Activated naive CD4-positive, alpha-beta T cell treated with anti-CD3 and anti-CD28 coated beads for 36 hours (primary cell): ENCODE measurements at regions of chr12 and their contacts with region 1.

Region 1: DNA sequence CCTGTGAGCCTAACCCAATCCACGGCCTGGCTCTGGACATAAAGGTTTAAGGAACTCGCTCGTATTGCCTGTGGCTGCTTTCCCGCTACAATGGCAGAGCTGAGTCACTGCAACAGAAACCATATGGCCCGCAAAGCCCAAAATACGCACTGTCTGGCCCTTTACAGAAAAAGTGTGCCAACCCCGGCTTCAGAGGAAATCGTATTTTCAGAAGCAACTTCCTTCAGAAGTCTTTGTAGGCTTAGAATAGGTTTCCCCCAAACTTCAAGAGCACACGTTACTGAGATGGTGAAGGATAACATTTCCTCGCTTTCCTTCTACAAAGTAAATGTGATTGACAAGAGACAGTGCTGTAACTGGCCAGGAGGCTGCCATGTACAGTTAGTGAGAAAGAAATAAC is 34.8 kb upstream of the TESC start:
- DNase-seq: peak; percentile 81
- H3K4me3 Mint-ChIP-seq: peak overlapping the region; percentile 13
- H3K27ac Mint-ChIP-seq: peak overlapping the region; percentile 80
- H3K4me1 Mint-ChIP-seq: peaks cover 16% of the 10 kb centered on the region
- H3K27me3 Mint-ChIP-seq: no peaks in the 10 kb centered on the region

Region 2: DNA sequence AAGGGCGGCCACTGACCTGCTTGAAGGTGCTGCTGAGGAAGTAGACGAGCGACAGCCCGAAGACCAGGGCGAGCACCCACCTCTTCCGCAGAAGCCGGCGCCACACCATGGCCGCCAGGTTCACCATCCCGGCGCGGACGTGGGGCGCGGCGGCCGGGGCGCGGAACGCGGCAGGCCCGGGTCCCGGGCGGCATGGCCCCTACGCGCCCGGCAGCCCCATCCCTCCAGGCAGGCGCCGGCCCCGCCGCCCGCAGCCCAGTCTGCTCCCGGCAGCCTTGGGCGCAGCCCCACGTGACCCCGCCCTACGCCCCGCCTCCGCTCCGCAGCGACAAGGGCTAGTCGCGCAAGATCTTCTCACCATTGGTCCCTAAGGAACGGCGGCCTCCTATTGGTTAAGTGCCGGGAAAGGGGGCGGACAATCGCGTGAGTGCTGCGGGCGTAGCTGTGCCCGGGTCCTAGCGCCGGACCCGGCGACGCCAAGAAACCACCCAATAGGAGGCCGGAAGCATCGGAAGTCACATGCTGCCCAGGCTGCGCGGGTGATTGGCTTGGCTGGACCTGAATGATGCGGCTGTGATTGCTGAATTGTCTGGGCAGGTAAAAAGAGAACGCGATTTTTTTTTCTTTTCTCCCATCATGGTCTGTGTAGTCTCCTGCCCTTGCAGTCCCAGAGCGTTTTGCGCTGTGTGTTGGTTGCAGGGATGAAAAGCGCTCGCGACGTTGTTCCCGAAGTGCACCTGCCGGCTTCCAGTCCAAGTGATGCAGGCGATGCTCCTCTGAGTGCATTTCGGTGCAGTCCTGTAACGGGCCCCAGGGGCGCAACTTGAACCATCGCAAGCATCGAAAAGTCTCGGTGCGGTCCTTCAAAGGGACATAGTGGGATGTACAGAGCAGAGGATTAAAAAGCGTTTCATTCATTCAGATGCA is 396.0 kb before region 1 on chr12 and contains the starts of genes RNFT2 and SPRING1:
- CTCF ChIA-PET with region 1: no interaction called
- intact Hi-C with region 1: loop called (anchors 10 kb)
- DNase-seq: peak; percentile 99
- H3K4me3 Mint-ChIP-seq: peak within 1 kb of the TSS; percentile 96
- H3K27ac Mint-ChIP-seq: peak within 1 kb of the TSS; percentile 79
- H3K4me1 Mint-ChIP-seq: peaks cover 22% of the 10 kb centered on the region
- H3K27me3 Mint-ChIP-seq: no peaks in the 10 kb centered on the region
- total RNA-seq, gene RNFT2: 13.0 to 15.8 TPM
- total RNA-seq, gene SPRING1: 14.8 to 16.9 TPM

Region 3: GRCh38 chr12:117011988-117012805 is 121.9 kb before region 1 on chr12:
- CTCF ChIA-PET with region 1: no interaction called
- intact Hi-C with region 1: no loop called
- DNase-seq: no peak
- H3K4me3 Mint-ChIP-seq: no peak overlapping the region
- H3K27ac Mint-ChIP-seq: no peak overlapping the region
- H3K4me1 Mint-ChIP-seq: no peaks in the 10 kb centered on the region
- H3K27me3 Mint-ChIP-seq: no peaks in the 10 kb centered on the region

Region 4: DNA sequence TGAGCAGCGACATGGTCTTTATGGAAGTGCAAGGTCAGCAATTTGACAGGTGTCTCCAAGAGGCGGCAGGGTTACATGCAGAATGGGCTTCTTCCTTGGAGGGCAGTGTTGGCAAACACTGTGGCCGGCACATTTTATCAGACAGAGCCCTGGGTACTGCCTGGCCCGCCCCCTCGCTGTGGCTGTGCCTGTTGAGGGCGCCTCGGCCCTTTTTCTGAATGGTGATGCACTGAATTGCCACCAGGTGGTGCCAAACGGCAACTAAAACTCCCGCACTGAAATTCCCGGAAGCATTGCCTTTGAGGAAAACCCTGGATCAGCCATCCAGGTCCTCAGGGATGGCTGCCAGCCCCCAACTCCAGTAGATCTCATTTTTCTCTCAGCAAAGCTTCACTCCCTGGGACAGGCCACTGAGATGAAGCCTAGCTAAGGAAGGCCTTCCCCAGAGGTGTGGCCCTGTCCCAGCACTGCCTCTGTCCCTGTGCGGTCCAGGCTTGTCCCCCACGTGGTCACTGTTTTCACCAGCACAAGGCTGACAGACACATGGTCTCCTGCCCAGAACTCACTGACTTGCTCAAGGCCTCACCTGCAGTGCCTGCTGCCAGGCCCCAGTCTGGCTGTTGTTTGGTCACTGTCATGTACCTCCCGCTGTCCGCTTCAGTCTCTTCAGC is 108.4 kb before region 1 on chr12:
- CTCF ChIA-PET with region 1: interaction called, 6 read pairs
- intact Hi-C with region 1: loop called (anchors 1 kb)
- DNase-seq: peak; percentile 54
- H3K4me3 Mint-ChIP-seq: no peak overlapping the region
- H3K27ac Mint-ChIP-seq: no peak overlapping the region
- H3K4me1 Mint-ChIP-seq: no peaks in the 10 kb centered on the region
- H3K27me3 Mint-ChIP-seq: no peaks in the 10 kb centered on the region

Region 5: DNA sequence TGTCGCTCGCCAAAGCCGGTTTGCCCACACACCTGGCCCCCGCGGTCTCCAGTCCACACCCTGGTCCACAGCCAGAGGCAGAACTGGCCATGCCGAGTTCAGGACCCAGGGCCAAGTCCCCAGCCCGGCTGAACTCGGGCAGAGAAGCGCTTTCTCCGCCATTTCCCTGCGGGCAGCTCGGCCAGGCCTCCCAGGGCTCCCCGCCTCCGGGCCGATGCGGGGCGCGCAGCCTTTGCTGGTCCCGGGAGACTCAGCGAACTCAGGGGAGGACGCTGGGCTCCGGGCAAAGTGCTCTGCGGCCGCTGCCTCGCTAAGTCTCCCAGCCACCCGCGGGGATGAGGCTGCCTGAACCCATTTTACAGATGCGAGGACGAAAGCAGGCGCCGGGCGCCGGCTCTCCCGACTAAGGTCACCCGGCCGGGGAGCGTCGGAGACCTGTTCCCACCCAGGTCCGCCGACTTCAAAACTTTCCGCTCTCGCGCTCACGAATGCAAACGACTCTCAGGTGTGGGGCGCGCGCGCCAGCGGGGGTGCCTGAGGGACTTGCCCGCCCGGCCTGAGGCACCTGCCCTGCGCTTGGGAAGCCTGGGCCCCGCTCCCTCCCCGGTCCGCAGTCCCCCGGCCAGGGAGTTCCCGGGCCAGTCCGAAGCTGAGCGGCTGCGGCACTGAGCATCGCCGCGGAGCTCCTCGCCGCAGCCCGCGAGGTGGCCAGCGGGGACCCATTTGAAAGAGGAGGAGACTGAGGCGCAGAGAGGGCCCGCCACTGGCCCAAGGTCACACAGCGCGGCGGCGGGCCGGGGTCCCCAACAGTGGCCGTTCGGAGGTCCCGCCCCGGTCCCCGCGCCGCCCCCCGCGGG is 35.5 kb before region 1 on chr12:
- CTCF ChIA-PET with region 1: no interaction called
- intact Hi-C with region 1: loop called (anchors 1 kb)
- DNase-seq: peak; percentile 53
- H3K4me3 Mint-ChIP-seq: peak overlapping the region; percentile 67
- H3K27ac Mint-ChIP-seq: no peak overlapping the region
- H3K4me1 Mint-ChIP-seq: peaks cover 10% of the 10 kb centered on the region
- H3K27me3 Mint-ChIP-seq: peaks cover 31% of the 10 kb centered on the region

Region 6: GRCh38 chr12:117155278-117156060 is 21.4 kb after region 1 on chr12:
- CTCF ChIA-PET with region 1: no interaction called
- intact Hi-C with region 1: loop called (anchors 1 kb)
- DNase-seq: peak; percentile 81
- H3K4me3 Mint-ChIP-seq: no peak overlapping the region
- H3K27ac Mint-ChIP-seq: no peak overlapping the region
- H3K4me1 Mint-ChIP-seq: peaks cover 17% of the 10 kb centered on the region
- H3K27me3 Mint-ChIP-seq: no peaks in the 10 kb centered on the region